ENCODE measurements at regions of chr9 and their contacts with region 1.

Region 1: DNA sequence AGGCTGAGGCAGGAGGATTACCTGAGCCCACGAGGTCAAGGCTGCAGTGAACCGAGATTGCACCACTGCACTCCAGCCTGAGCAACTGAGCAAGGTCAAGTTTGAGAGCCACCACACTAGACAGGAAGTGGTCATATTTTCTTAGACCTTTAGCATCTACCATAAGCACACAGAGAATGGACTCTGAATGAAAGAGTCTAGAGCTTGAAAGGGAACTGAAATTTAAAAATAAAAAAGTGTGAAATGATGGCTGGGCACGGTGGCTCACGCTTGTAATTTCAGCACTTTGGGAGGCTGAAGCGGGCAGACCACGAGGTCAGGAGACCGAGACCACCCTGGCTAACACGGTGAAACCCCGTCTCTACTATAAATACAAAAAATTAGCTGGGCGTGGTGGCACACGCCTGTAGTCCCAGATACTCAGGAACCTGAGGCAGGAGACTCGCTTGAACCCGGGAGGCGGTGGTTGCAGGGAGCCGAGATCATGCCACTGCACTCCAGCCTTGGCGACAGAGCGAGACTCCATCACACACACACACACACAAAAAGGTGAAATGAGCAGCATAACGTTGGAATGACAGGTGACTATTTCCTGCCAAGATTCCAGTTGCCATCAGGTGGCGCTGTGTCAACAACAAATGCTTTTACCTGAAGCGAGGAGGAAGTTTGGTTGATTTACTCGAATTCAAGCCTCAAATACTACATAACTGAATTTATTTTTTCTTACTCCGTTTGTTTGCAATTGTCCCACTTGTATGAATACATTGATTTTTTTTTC is 21.3 kb upstream of the AK3 start:
- DNase-seq: peak; percentile 84
- ATAC-seq: peak; percentile 29
- H3K4me3 Mint-ChIP-seq: peak overlapping the region; percentile 56
- H3K27ac Mint-ChIP-seq: peak overlapping the region; percentile 46; the same call in 1 of the 2 replicates
- H3K4me1 Mint-ChIP-seq: peaks cover 15% of the 10 kb centered on the region
- H3K27me3 Mint-ChIP-seq: no peaks in the 10 kb centered on the region
- CTCF ChIP-seq: peak; percentile 70

Region 2: GRCh38 chr9:4740638-4741364 is 21.5 kb before region 1 on chr9 and contains the start of gene AK3:
- CTCF ChIA-PET with region 1: interaction called, 19 read pairs
- POLR2A ChIA-PET with region 1: interaction called, 3 read pairs
- DNase-seq: peak; percentile 91
- ATAC-seq: peak; percentile 88
- H3K4me3 Mint-ChIP-seq: peak within 1 kb of the TSS; percentile 84
- H3K27ac Mint-ChIP-seq: peak within 1 kb of the TSS; percentile 91
- H3K4me1 Mint-ChIP-seq: peaks cover 34% of the 10 kb centered on the region
- H3K27me3 Mint-ChIP-seq: no peaks in the 10 kb centered on the region
- CTCF ChIP-seq: no peak
- total RNA-seq, gene AK3: 28.5 to 30.2 TPM (median 29.1 TPM) in 3 replicates

Region 3: DNA sequence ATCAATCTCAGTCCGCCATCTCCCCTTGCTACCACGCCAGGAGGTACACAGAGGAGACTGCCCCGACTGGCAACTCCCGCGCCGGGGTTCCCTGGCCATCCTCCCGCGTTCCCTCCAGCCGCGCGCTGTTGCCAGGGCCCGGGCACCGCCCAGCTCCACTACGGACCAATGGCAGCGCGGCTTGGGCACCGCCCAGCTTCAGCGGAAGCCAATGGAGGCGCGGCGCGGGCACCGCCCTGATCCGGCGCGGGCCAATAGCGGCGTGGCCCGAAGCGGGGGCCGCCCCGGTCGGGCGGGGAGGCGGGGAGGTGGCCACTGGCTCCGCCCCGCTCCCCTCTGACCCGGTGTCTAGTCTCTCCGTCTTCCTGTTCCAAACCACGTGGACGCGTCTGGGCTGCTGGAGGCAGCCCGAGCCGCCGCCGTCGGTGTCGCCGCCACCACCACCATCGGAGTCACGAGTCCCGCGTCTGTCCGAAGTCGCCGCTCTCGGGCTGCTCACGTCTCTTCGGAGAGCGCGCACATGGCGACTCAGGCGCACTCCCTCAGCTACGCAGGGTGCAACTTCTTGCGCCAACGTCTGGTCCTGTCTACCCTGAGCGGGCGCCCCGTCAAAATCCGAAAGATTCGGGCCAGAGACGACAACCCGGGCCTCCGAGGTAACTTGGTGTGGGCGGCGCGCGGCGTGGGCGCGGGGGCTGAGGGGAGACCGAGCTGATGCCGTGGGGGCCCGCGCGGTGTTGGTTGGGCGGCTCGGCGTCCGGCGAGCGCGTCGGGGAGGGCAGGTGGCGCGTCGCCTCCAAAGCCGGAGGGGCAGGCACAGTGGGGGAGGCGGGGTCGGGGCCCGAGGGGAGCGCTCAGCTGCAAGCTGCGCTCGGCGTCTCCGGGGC is 30.5 kb after region 1 on chr9 and contains the start of gene RCL1:
- CTCF ChIA-PET with region 1: interaction called, 24 read pairs
- POLR2A ChIA-PET with region 1: interaction called, 3 read pairs
- DNase-seq: peak; percentile 98
- ATAC-seq: peak; percentile 94
- H3K4me3 Mint-ChIP-seq: peak within 1 kb of the TSS; percentile 98
- H3K27ac Mint-ChIP-seq: peak within 1 kb of the TSS; percentile 96
- H3K4me1 Mint-ChIP-seq: peaks cover 37% of the 10 kb centered on the region
- H3K27me3 Mint-ChIP-seq: peaks cover 5% of the 10 kb centered on the region
- CTCF ChIP-seq: no peak
- total RNA-seq, gene RCL1: 22.4 to 27.2 TPM (median 25.3 TPM) in 3 replicates

Region 4: GRCh38 chr9:4984621-4985385 is 222.5 kb after region 1 on chr9 and contains the start of gene JAK2:
- CTCF ChIA-PET with region 1: interaction called, 14 read pairs
- POLR2A ChIA-PET with region 1: interaction called, 3 read pairs
- DNase-seq: peak; percentile 87
- ATAC-seq: peak; percentile 86
- H3K4me3 Mint-ChIP-seq: peak within 1 kb of the TSS; percentile 92
- H3K27ac Mint-ChIP-seq: peak within 1 kb of the TSS; percentile 91
- H3K4me1 Mint-ChIP-seq: peaks cover 16% of the 10 kb centered on the region
- H3K27me3 Mint-ChIP-seq: peaks cover 15% of the 10 kb centered on the region
- CTCF ChIP-seq: no peak
- total RNA-seq, gene JAK2: 2.0 to 3.3 TPM (median 2.4 TPM) in 3 replicates

Measured in WTC11 (cell line).